Activated B cell treated with CpG ODN at 0.5 μM for 24 hours (primary cell): ENCODE measurements at regions of chr17 and their contacts with region 1.

Region 1: GRCh38 chr17:7336240-7337175 is at the start of gene ACAP1:
- DNase-seq: peak; percentile 67
- ATAC-seq: peak; percentile 96
- H3K4me3 Mint-ChIP-seq: peak within 1 kb of the TSS; percentile 85
- H3K27ac Mint-ChIP-seq: peak within 1 kb of the TSS; percentile 98
- H3K4me1 Mint-ChIP-seq: peaks cover 49% of the 10 kb centered on the region
- H3K27me3 Mint-ChIP-seq: no peaks in the 10 kb centered on the region
- CTCF ChIP-seq: no peak
- total RNA-seq, gene ACAP1: 298 and 328 TPM in 2 replicates

Region 2: GRCh38 chr17:7314719-7315569 is 21.6 kb before region 1 on chr17 and contains the start of gene GPS2:
- CTCF ChIA-PET with region 1: interaction called, 4 read pairs
- POLR2A ChIA-PET with region 1: interaction called, 52 read pairs
- intact Hi-C with region 1: no loop called
- DNase-seq: peak; percentile 95
- ATAC-seq: peak; percentile 82
- H3K4me3 Mint-ChIP-seq: peak within 1 kb of the TSS; percentile 89
- H3K27ac Mint-ChIP-seq: peak within 1 kb of the TSS; percentile 87
- H3K4me1 Mint-ChIP-seq: peaks cover 54% of the 10 kb centered on the region
- H3K27me3 Mint-ChIP-seq: no peaks in the 10 kb centered on the region
- CTCF ChIP-seq: no peak
- total RNA-seq, gene GPS2: 105 and 115 TPM in 2 replicates

Region 3: GRCh38 chr17:7323731-7324437 is 12.6 kb before region 1 on chr17:
- CTCF ChIA-PET with region 1: interaction called, 18 read pairs
- POLR2A ChIA-PET with region 1: interaction called, 20 read pairs
- intact Hi-C with region 1: loop called (anchors 1 kb)
- DNase-seq: peak; percentile 62
- ATAC-seq: peak; percentile 41
- H3K4me3 Mint-ChIP-seq: no peak overlapping the region
- H3K27ac Mint-ChIP-seq: no peak overlapping the region
- H3K4me1 Mint-ChIP-seq: peaks cover 15% of the 10 kb centered on the region
- H3K27me3 Mint-ChIP-seq: no peaks in the 10 kb centered on the region
- CTCF ChIP-seq: peak; percentile 64